Activated CD4-positive, alpha-beta memory T cell treated with anti-CD3 and anti-CD28 coated beads, Interleukin-2, amount 10 ng/mL, durations not matched to agents 7 days and 5 days (primary cell): ENCODE measurements at regions of chr2 and their contacts with region 1.

Region 1: GRCh38 chr2:8324164-8324856 is 357.5 kb upstream of the ID2 start:
- DNase-seq: no peak
- H3K4me3 Mint-ChIP-seq: no peak overlapping the region
- H3K27ac Mint-ChIP-seq: no peak overlapping the region
- H3K4me1 Mint-ChIP-seq: peaks cover 43% of the 10 kb centered on the region
- H3K27me3 Mint-ChIP-seq: peaks cover 9% of the 10 kb centered on the region

Region 2: DNA sequence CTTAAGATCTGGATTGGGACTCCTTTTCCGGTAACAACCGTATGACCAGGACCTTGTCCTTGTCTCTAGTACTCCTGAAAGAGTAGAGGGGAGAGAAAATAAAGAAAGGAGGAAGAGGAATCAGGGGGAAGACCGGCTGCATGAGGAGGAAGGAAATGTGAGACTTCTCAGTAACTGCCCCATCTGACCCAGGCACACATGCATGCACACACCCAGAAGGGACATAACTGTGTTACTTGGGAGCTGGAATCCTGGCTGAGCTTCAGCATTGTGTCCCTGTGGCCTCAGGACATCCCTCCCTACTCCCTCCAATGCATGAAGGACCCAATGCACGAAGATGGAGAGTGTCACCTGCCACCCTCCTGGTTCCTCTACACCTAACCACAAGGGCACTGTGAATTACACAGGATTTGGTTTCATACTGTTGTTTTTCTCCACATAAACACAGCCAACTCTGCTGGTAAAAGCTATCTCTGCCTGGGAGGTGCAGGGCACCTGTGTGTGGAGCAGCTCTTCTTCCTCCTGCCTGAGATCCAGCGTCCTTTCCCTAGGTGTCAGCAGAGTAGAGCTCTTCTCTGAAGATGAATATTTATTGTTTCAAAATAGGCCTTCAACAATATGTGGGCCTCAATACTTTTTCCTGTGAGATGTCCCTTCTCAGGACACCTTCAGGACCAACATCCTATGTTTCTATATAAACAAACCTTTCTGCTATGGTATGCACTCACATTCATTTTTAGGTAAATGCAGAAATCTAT is 216.5 kb before region 1 on chr2:
- CTCF ChIA-PET with region 1: no interaction called
- POLR2A ChIA-PET with region 1: no interaction called
- DNase-seq: no peak
- H3K4me3 Mint-ChIP-seq: no peak overlapping the region
- H3K27ac Mint-ChIP-seq: no peak overlapping the region
- H3K4me1 Mint-ChIP-seq: peaks cover 12% of the 10 kb centered on the region
- H3K27me3 Mint-ChIP-seq: no peaks in the 10 kb centered on the region

Region 3: GRCh38 chr2:8312861-8313830 is 11.2 kb before region 1 on chr2:
- CTCF ChIA-PET with region 1: interaction called, 4 read pairs
- POLR2A ChIA-PET with region 1: interaction called, 37 read pairs
- DNase-seq: peak; percentile 43
- H3K4me3 Mint-ChIP-seq: peak overlapping the region; percentile 69
- H3K27ac Mint-ChIP-seq: peak overlapping the region; percentile 90
- H3K4me1 Mint-ChIP-seq: peaks cover 77% of the 10 kb centered on the region
- H3K27me3 Mint-ChIP-seq: peaks cover 3% of the 10 kb centered on the region